ENCODE measurements at regions of chr4 and their contacts with region 1.

Region 1: DNA sequence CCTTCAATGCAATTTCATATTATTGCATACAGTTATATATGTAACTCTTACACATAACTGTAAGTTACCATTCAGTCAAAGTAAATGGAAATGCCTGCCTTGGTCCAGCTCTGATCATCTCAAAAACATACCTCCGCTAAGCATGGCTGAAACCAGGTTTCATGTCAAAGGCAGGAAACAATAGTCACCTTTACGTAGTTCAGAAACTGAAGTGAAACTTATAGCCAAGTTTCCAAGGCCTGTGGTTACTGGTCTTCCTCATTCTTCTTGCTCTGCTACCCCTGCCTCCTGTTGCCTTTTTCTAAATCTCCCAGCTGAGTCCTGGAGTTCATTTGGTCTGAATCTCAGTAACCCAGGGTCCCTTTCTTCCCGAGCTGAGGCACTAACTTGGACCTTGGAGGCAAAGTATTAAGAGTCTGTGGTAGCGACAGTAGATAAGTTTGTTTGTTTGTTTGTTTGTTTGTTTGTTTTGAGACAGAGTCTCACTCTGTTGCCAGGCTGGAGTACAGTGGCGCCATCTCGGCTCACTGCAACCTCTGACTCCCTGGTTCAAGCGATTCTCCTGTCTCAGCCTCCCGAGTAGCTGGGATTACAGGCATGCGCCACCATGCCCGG is 30.8 kb downstream of the DAPP1 start:
- DNase-seq: no peak
- H3K4me3 Mint-ChIP-seq: peak overlapping the region; percentile 62
- H3K27ac Mint-ChIP-seq: peak overlapping the region; percentile 91
- H3K4me1 Mint-ChIP-seq: peaks cover 64% of the 10 kb centered on the region
- H3K27me3 Mint-ChIP-seq: no peaks in the 10 kb centered on the region

Region 2: GRCh38 chr4:99200138-99200537 is 647.3 kb before region 1 on chr4:
- intact Hi-C with region 1: no loop called
- DNase-seq: no peak
- H3K4me3 Mint-ChIP-seq: no peak overlapping the region
- H3K27ac Mint-ChIP-seq: no peak overlapping the region
- H3K4me1 Mint-ChIP-seq: no peaks in the 10 kb centered on the region
- H3K27me3 Mint-ChIP-seq: no peaks in the 10 kb centered on the region

Region 3: DNA sequence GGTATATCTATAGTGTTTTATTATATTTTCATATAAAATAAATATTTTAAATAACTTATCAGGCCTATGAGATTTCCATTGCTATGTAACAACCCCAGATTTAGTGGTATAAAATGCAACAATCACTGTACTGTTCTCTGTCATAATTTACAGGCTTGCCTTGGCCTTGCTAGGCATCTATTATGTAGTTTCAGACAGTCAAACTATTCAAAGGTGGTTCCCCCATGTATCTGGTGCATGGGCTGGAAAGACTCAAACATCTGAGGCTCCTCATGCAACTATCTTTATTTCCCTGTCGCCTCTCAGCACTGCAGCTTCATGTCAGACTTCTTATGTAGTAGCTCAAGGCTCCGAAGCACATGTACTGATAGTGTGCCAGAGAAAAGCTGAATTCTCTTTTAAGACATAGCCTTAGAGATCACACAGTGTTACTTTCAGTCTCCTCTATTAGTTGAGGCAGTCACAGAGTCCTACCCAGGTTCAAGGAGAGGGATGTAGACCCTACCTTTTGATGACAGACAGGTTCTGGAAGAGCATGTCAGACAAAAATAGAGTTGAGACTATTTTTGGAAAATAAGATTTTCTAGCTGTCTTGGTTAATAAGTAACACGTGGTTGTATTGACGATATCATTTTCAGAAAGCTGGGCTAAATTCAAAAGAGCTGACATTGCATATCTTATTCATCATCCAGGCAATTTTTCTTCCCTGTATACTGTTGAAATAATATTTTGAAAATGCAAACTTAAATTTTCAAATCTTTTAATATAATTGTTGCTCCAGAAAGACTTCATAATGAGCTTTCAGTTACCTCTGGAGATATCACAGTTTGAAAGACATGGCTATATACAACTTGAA is 253.5 kb before region 1 on chr4:
- intact Hi-C with region 1: no loop called
- DNase-seq: no peak
- H3K4me3 Mint-ChIP-seq: no peak overlapping the region
- H3K27ac Mint-ChIP-seq: no peak overlapping the region
- H3K4me1 Mint-ChIP-seq: no peaks in the 10 kb centered on the region
- H3K27me3 Mint-ChIP-seq: no peaks in the 10 kb centered on the region

Region 4: GRCh38 chr4:99755223-99755944 is 92.1 kb before region 1 on chr4:
- intact Hi-C with region 1: loop called (anchors 5 kb)
- DNase-seq: no peak
- H3K4me3 Mint-ChIP-seq: no peak overlapping the region
- H3K27ac Mint-ChIP-seq: no peak overlapping the region
- H3K4me1 Mint-ChIP-seq: peaks cover 21% of the 10 kb centered on the region
- H3K27me3 Mint-ChIP-seq: peaks cover 3% of the 10 kb centered on the region

Region 5: DNA sequence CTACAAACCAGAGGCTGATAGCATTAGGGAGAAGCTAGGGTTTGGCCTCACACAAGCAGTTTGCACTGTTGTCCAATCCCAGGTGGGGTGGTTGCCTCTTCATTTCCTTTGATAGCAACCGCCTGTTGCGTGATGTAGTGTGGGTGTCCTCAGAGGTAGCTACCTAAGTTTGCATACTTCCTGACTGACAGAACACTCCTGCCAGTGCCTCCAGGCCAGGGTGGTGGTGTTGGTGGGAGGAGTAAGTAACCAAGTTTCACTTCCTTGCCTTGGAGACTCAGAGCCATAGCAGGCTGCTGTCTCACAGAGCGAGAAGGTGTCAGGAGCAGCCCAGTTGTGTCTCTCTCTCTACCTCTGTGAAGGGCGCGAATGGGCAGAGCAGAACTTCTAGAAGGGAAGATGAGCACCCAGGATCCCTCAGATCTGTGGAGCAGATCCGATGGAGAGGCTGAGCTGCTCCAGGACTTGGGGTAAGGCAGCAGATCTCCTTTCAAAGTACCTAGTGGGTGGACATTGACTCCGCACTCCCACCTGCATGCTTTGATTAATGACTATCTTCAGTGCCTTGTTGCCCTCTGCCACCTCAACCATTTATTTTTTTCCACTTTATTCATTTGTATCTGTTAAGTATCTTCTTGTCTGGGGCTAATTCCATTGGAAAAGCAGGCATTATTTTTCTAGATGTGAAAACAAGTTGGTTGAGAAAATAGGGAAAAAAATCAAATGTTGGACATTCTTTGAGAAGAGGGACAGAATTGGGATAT is 30.7 kb before region 1 on chr4 and contains the start of gene DAPP1:
- intact Hi-C with region 1: loop called (anchors 1 kb)
- DNase-seq: peak; percentile 83
- H3K4me3 Mint-ChIP-seq: peak within 1 kb of the TSS; percentile 92
- H3K27ac Mint-ChIP-seq: peak within 1 kb of the TSS; percentile 94
- H3K4me1 Mint-ChIP-seq: peaks cover 73% of the 10 kb centered on the region
- H3K27me3 Mint-ChIP-seq: no peaks in the 10 kb centered on the region
- total RNA-seq, gene DAPP1: 21.4 and 23.6 TPM in 2 replicates

Region 6: DNA sequence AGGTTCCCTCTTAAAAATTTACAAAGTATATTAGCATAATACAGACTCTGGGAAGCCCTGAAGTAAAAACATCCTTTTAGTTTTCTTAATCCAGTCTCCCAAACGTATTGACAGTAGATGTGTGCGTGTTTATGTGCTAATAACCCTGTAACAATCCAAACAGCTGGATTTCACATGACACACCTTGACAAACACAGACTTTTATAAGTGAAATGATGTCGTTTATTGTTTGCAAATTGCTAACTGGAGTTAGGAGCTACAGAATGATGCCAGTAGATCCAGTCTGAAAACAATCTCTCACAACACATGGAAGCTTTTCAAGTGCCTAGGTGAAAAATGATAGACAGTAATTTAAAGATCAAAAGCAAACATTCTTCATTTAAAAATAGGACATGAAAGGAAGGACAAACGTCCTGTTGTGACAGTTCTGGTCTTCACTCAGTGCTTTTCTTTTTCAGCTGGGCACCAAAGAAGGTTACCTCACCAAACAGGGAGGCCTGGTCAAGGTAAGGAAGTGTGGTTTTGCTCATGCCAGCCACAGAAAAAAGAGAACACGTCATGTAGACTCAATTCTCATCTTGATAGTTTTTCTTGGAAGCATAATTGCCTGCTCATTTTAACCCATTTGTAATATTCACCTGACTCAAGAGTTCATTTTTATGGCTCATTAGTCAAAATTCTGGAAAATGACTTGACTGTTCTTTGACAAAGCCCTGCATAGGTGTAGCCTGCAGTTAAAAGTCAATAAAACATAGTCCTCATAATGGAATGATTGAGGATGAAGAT is 13.8 kb after region 1 on chr4:
- intact Hi-C with region 1: loop called (anchors 1 kb)
- DNase-seq: no peak
- H3K4me3 Mint-ChIP-seq: no peak overlapping the region
- H3K27ac Mint-ChIP-seq: peak overlapping the region; percentile 52
- H3K4me1 Mint-ChIP-seq: peaks cover 41% of the 10 kb centered on the region
- H3K27me3 Mint-ChIP-seq: no peaks in the 10 kb centered on the region

Region 7: GRCh38 chr4:99868126-99868596 is 20.7 kb after region 1 on chr4:
- intact Hi-C with region 1: loop called (anchors 1 kb)
- DNase-seq: no peak
- H3K4me3 Mint-ChIP-seq: no peak overlapping the region
- H3K27ac Mint-ChIP-seq: peak overlapping the region; percentile 65
- H3K4me1 Mint-ChIP-seq: peaks cover 27% of the 10 kb centered on the region
- H3K27me3 Mint-ChIP-seq: no peaks in the 10 kb centered on the region

Region 8: DNA sequence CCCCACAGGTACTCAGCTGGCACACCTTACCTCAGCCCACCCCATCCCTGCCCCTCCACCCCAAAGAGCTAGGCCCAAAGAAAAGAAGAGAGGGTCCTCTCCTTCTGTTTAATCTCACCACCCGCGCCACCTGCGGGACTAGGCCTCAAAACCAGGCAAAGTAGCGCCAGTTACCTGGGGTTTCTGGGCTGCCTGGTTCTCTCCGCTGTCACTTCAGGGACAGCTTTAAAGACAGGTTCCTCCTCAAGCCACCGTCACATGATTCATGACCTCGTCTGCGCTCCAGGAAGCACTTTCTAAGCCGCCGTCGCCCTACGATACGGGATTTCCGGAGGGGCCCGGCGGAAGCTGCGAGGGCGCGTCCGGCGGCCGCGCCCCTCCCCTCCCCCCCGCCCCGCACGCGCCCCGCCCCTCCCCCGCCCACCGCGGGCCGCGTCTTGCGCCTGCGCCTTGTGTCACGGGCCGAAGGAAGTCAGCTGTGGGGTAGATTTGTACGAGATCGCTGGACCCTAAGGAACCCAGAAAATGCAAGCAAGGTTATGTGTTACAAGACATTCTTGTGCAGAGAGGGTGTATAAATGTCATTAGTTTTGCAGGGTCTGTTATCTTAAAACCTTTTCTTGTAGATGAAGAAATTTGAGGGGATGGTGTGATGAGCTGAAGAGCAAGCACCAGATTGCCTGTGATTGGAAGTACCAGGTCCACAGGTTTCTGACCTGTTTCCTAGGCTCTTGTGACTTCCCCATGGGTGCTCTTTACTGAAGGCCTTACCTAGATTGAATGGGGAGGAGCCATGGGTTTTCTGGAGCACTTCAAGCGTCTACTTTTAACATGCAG is 46.9 kb after region 1 on chr4 and contains the start of gene LAMTOR3:
- intact Hi-C with region 1: loop called (anchors 2 kb)
- DNase-seq: peak; percentile 87
- H3K4me3 Mint-ChIP-seq: peak within 1 kb of the TSS; percentile 98
- H3K27ac Mint-ChIP-seq: peak within 1 kb of the TSS; percentile 95
- H3K4me1 Mint-ChIP-seq: peaks cover 27% of the 10 kb centered on the region
- H3K27me3 Mint-ChIP-seq: no peaks in the 10 kb centered on the region
- total RNA-seq, gene LAMTOR3: 27.1 and 28.8 TPM in 2 replicates

Region 9: GRCh38 chr4:99949034-99949998 is 101.8 kb after region 1 on chr4:
- intact Hi-C with region 1: loop called (anchors 2 kb)
- DNase-seq: peak; percentile 87
- H3K4me3 Mint-ChIP-seq: no peak overlapping the region
- H3K27ac Mint-ChIP-seq: no peak overlapping the region
- H3K4me1 Mint-ChIP-seq: peaks cover 31% of the 10 kb centered on the region
- H3K27me3 Mint-ChIP-seq: no peaks in the 10 kb centered on the region

Measured in activated T-helper 2 cell treated with anti-CD3 and anti-CD28 coated beads, Interferon-gamma antibody, Interleukin-2, Interleukin-4, amounts not matched to agents 10 μg/mL and 5 μg/mL and 100 μg/mL, durations not matched to agents 14 hours and 24 hours and 36 hours (primary cell).